ENCODE measurements at regions of chr1 and their contacts with region 1.

Region 1: DNA sequence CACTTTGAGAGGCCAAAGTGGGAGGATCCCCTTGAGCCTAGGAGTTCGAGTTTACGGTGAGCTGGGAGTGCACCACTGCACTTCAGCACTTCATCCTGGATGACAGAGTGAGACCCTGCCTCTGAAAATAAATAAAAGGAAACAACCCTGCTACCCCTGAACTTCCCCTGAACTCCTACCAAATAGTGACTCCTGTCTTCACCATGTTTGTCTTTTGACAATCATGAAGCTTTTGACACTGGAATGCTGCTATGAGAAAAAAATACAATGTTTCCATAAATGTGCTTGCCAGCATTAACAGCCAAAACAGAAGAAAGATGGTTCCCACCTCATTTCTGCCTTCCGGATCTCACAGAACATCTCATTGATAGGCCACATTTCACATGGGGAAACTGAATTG is 10.4 kb downstream of the ZBTB8A start:
- DNase-seq: no peak
- ATAC-seq: no peak
- H3K4me3 ChIP-seq: no peak overlapping the region
- H3K27ac ChIP-seq: no peak overlapping the region
- H3K4me1 ChIP-seq: no peaks in the 10 kb centered on the region
- H3K27me3 ChIP-seq: no peaks in the 10 kb centered on the region
- CTCF ChIP-seq: no peak

Region 2: GRCh38 chr1:32464716-32465577 is 84.7 kb before region 1 on chr1 and contains the start of gene ZBTB8B:
- CTCF ChIA-PET with region 1: no interaction called
- POLR2A ChIA-PET with region 1: interaction called, 12 read pairs
- in situ Hi-C with region 1: no loop called
- intact Hi-C with region 1: no loop called
- DNase-seq: no peak
- ATAC-seq: peak; percentile 94
- H3K4me3 ChIP-seq: peak within 1 kb of the TSS; percentile 53 to 62
- H3K27ac ChIP-seq: no peak within 1 kb of the TSS
- H3K4me1 ChIP-seq: 0 out of 2 replicates have a peak, but pooled peaks cover 5% of the 10 kb centered on the region
- H3K27me3 ChIP-seq: peaks cover 13% of the 10 kb centered on the region
- CTCF ChIP-seq: no peak
- total RNA-seq, gene ZBTB8B: 0.08 TPM

Region 3: DNA sequence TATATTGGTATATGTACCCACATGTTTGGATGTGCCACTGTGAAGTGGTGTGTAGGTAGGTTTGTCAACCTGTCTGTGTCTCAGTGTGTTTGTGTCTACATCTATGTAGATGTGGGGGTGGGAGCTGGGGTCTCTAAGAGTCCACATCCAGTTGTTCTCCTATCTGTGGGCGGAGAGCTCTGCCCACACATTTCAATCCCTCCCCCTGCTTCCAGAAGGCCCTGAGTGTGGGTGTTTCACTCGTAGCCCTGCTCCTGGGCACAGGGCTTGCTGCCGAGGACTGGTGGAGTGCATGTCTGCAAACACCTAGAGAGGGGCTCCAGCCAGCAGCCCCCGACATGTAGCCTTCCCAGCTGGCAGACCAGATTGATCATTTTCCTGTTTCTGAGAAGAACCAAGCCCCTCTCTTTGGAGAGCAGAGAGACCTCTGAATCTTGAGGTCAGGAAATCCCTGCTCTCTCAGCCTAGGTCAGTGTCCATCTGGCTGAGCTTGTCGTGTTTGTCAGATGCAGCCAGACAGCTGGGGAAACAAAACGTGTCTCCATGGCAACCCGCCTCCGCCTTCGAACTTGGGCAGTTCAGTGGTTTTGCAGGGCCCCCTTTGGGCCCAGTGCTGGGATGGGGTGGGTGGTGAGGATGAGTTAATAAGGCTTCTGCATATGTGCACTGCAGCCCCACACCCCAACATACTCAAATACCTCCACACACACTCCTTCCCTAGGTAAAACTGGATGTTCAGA is 184.1 kb after region 1 on chr1:
- CTCF ChIA-PET with region 1: no interaction called
- POLR2A ChIA-PET with region 1: interaction called, 10 read pairs
- in situ Hi-C with region 1: no loop called
- intact Hi-C with region 1: no loop called
- DNase-seq: no peak
- ATAC-seq: no peak
- H3K4me3 ChIP-seq: no peak overlapping the region
- H3K27ac ChIP-seq: no peak overlapping the region
- H3K4me1 ChIP-seq: peaks cover 15% of the 10 kb centered on the region; the same call in 1 of the 2 replicates
- H3K27me3 ChIP-seq: no peaks in the 10 kb centered on the region
- CTCF ChIP-seq: no peak